Activated naive CD8-positive, alpha-beta T cell treated with anti-CD3 and anti-CD28 coated beads, Interleukin-2, amount 10 ng/mL, durations not matched to agents 7 days and 5 days (primary cell): ENCODE measurements at regions of chr1 and their contacts with region 1.

Region 1: GRCh38 chr1:35192853-35193664 is at the start of gene SFPQ:
- DNase-seq: peak; percentile 95
- ATAC-seq: peak; percentile 91
- H3K4me3 Mint-ChIP-seq: peak within 1 kb of the TSS; percentile 99
- H3K27ac Mint-ChIP-seq: peak within 1 kb of the TSS; percentile 98
- H3K4me1 Mint-ChIP-seq: peaks cover 36% of the 10 kb centered on the region
- H3K27me3 Mint-ChIP-seq: no peaks in the 10 kb centered on the region
- total RNA-seq, gene SFPQ: 338 to 348 TPM

Region 2: GRCh38 chr1:34865981-34866761 is 326.9 kb before region 1 on chr1:
- POLR2A ChIA-PET with region 1: interaction called, 17 read pairs
- DNase-seq: peak; percentile 94
- ATAC-seq: peak; percentile 58
- H3K4me3 Mint-ChIP-seq: peak overlapping the region; percentile 79
- H3K27ac Mint-ChIP-seq: peak overlapping the region; percentile 83
- H3K4me1 Mint-ChIP-seq: peaks cover 30% of the 10 kb centered on the region
- H3K27me3 Mint-ChIP-seq: peaks cover 1% of the 10 kb centered on the region

Region 3: DNA sequence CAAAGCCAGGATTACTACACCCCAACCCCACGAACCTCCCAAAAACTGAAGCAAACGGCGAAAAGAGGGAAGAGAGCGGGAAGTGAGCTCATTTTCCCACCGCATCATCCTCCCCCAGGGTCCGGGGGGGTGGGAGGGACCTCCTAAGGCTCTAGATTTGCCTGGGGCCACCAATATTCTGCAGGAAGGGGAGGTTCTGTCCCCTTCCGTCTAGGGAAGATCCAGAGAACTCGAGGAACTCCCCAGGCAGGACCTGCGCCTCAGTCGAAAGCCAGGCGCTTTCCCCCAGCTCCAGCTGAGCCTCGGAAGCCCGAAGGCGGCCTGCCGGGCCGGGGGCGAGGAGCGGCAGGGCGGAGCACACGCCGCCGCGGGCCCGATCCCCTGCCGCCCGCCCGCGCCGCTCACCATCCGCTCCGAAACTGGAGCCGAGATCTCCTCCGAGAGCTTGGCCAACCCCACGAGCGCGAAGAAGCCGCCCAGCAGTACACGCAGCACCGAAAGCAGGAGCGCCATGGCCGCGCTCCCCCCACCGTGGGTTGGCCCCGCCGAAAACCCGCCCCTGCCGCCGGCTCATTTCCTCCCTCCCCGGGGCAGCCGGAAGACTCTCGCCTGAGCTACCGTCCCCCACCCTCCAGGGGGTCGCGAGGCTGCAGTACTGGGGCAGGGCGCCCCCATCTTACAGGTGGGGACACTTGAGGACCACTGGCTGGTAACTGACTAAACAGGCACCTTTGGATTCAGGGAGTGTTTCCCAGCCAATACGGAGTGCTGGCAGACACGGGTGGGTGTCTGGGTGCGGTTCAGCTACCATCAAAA is 208.1 kb before region 1 on chr1 and contains the start of gene TMEM35B:
- POLR2A ChIA-PET with region 1: no interaction called
- DNase-seq: peak; percentile 83
- ATAC-seq: peak; percentile 93
- H3K4me3 Mint-ChIP-seq: peak within 1 kb of the TSS; percentile 99
- H3K27ac Mint-ChIP-seq: peak within 1 kb of the TSS; percentile 91
- H3K4me1 Mint-ChIP-seq: peaks cover 23% of the 10 kb centered on the region
- H3K27me3 Mint-ChIP-seq: no peaks in the 10 kb centered on the region
- total RNA-seq, gene TMEM35B: 38.0 to 39.9 TPM